Naive thymus-derived CD4-positive, alpha-beta T cell (primary cell): ENCODE measurements at regions of chr10 and their contacts with region 1.

Region 1: DNA sequence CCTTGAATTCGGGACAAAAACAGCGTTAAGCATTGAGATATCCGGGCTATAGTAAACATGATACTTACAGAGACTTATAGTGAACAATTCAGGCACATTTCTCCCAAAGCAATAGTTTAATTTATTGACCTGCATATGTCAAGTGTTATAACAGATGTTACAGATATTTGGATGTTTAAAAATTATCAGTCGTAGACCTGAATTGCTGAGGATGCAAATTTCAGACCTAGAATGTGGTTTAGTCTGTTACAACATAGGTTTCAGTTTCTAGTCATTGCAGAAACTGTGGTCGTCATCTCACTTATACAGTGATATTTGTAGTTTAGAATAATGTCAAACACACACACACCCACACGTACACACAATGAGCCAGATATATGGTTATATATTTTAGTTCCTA is 85.2 kb downstream of the VTI1A start:
- DNase-seq: no peak
- ATAC-seq: peak; percentile 44
- H3K4me3 ChIP-seq: no peak overlapping the region
- H3K4me3 Mint-ChIP-seq: peak overlapping the region in 2 of 10 donors; percentile 45 to 73
- H3K27ac ChIP-seq: no peak overlapping the region
- H3K27ac Mint-ChIP-seq: peak overlapping the region in 3 of 9 donors; percentile 23 to 51 (median 50)
- H3K4me1 ChIP-seq: no peaks in the 10 kb centered on the region
- H3K4me1 Mint-ChIP-seq: peaks cover 4 to 30% (median 22%) of the 10 kb centered on the region in 7 donors
- H3K27me3 ChIP-seq: no peaks in the 10 kb centered on the region
- H3K27me3 Mint-ChIP-seq: peaks cover 0 to 12% (median 0%) of the 10 kb centered on the region in 5 donors

Region 2: GRCh38 chr10:112389147-112389822 is 142.9 kb before region 1 on chr10:
- CTCF ChIA-PET with region 1: no interaction called
- POLR2A ChIA-PET with region 1: no interaction called
- intact Hi-C with region 1: loop called in 1 of 2 experiments (anchors 5 kb)
- DNase-seq: peak in 8 of 9 donors; percentile 14 to 51 (median 23)
- ATAC-seq: peak; percentile 94
- H3K4me3 ChIP-seq: no peak overlapping the region
- H3K4me3 Mint-ChIP-seq: peak overlapping the region in 7 of 10 donors; percentile 25 to 56 (median 43)
- H3K27ac ChIP-seq: no peak overlapping the region
- H3K27ac Mint-ChIP-seq: peak overlapping the region; percentile 31 to 75 (median 73)
- H3K4me1 ChIP-seq: peaks cover 8 to 30% of the 10 kb centered on the region in 2 donors
- H3K4me1 Mint-ChIP-seq: peaks cover 44 to 78% (median 65%) of the 10 kb centered on the region in 7 donors
- H3K27me3 ChIP-seq: no peaks in the 10 kb centered on the region
- H3K27me3 Mint-ChIP-seq: no peaks in the 10 kb centered on the region